PC-9 (cell line): ENCODE measurements at regions of chr10 and their contacts with region 1.

Region 1: GRCh38 chr10:52818019-52818418 is 45.4 kb upstream of the MBL2 start:
- DNase-seq: peak; percentile 25 to 64
- H3K4me3 ChIP-seq: no peak overlapping the region
- H3K27ac ChIP-seq: no peak overlapping the region
- H3K4me1 ChIP-seq: no peaks in the 10 kb centered on the region
- H3K27me3 ChIP-seq: no peaks in the 10 kb centered on the region
- CTCF ChIP-seq: peak; percentile 79

Region 2: GRCh38 chr10:52864201-52865106 is 46.4 kb after region 1 on chr10:
- CTCF ChIA-PET with region 1: no interaction called
- POLR2A ChIA-PET with region 1: interaction called, 3 read pairs
- intact Hi-C with region 1: loop called (anchors 5 kb)
- DNase-seq: peak; percentile 60 to 84
- H3K4me3 ChIP-seq: no peak overlapping the region
- H3K27ac ChIP-seq: no peak overlapping the region
- H3K4me1 ChIP-seq: no peaks in the 10 kb centered on the region
- H3K27me3 ChIP-seq: no peaks in the 10 kb centered on the region
- CTCF ChIP-seq: no peak

Region 3: GRCh38 chr10:53209944-53210611 is 392.1 kb after region 1 on chr10:
- CTCF ChIA-PET with region 1: no interaction called
- POLR2A ChIA-PET with region 1: no interaction called
- intact Hi-C with region 1: loop called (anchors 5 kb)
- DNase-seq: peak in 1 of 2 experiments; percentile 33
- H3K4me3 ChIP-seq: no peak overlapping the region
- H3K27ac ChIP-seq: no peak overlapping the region
- H3K4me1 ChIP-seq: no peaks in the 10 kb centered on the region
- H3K27me3 ChIP-seq: no peaks in the 10 kb centered on the region
- CTCF ChIP-seq: peak; percentile 76

Region 4: DNA sequence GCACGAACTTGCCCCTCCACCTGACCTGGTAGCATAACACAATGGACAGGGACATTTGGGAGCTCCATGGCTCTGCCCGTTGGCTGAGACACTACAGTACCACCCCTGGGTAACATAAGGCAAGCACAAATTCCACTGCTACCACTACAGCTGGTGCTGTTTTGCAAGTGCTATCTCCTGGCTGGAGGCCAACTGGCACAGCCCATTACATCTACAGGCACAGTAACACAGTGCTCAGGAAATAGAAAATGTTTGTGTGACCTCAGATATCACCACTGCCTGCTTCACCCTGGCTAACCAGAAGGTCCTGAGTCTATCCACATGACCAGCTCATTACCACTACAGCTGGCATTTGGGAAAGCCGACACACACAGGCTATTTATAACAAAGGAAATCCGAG is 585.7 kb after region 1 on chr10:
- CTCF ChIA-PET with region 1: no interaction called
- POLR2A ChIA-PET with region 1: no interaction called
- intact Hi-C with region 1: loop called (anchors 10 kb)
- DNase-seq: peak in 1 of 2 experiments; percentile 50
- H3K4me3 ChIP-seq: no peak overlapping the region
- H3K27ac ChIP-seq: no peak overlapping the region
- H3K4me1 ChIP-seq: no peaks in the 10 kb centered on the region
- H3K27me3 ChIP-seq: no peaks in the 10 kb centered on the region
- CTCF ChIP-seq: no peak